ENCODE measurements at regions of chr2 and their contacts with region 1.

Region 1: DNA sequence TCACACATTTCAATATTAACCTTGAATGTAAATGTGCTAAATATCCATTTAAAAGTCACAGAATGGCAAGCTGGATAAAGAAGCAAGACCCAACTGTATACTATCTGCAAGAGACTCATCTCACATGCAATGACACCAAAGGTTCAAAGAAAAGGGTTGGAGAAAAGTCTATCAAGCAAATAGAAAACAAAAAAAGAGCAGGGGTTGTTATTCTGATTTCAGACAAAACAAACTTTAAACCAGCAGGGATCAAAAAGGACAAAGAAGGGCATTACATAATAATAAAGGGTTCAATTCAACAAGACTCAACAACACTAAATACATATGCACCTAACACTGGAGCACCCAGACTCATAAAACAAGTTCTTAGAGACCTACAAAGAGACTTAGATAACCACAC is 14.5 kb upstream of the UNC80 start:
- DNase-seq: no peak
- H3K4me3 ChIP-seq: no peak overlapping the region
- H3K27ac ChIP-seq: no peak overlapping the region
- H3K4me1 ChIP-seq: no peaks in the 10 kb centered on the region
- H3K27me3 ChIP-seq: peaks cover 65% of the 10 kb centered on the region
- CTCF ChIP-seq: no peak

Region 2: GRCh38 chr2:209663150-209663549 is 94.0 kb before region 1 on chr2:
- CTCF ChIA-PET with region 1: no interaction called
- POLR2A ChIA-PET with region 1: interaction called, 20 read pairs
- intact Hi-C with region 1: no loop called
- DNase-seq: no peak
- H3K4me3 ChIP-seq: no peak overlapping the region
- H3K27ac ChIP-seq: no peak overlapping the region
- H3K4me1 ChIP-seq: no peaks in the 10 kb centered on the region
- H3K27me3 ChIP-seq: no peaks in the 10 kb centered on the region
- CTCF ChIP-seq: no peak

Region 3: GRCh38 chr2:210663631-210664089 is 906.5 kb after region 1 on chr2:
- CTCF ChIA-PET with region 1: no interaction called
- POLR2A ChIA-PET with region 1: no interaction called
- intact Hi-C with region 1: no loop called
- DNase-seq: peak; percentile 54
- H3K4me3 ChIP-seq: no peak overlapping the region
- H3K27ac ChIP-seq: no peak overlapping the region
- H3K4me1 ChIP-seq: no peaks in the 10 kb centered on the region
- H3K27me3 ChIP-seq: no peaks in the 10 kb centered on the region
- CTCF ChIP-seq: peak; percentile 56

Measured in A673 (cell line).